Activated CD4-positive, alpha-beta T cell treated with anti-CD3 and anti-CD28 coated beads, Interleukin-2, amount 10 ng/mL, durations not matched to agents 24 days and 14 days (primary cell): ENCODE measurements at regions of chr13 and their contacts with region 1.

Region 1: DNA sequence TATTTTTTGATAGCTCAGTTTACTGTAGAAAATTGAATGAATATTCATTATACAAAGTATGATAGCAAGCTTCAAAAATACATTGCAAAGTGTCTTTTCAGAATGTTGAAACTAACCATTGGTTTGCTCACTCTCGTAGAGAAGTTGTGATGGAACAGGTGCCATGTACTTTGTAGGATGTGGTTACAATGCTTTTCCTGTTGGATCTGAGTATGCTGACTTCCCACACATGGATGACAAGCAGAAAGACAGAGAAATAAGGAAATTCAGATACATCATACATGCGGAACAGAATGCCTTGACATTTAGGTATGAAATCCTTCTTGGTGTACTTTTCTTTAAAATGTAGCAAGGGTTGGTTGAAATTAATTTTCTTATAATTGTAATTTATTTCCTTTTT is 30.5 kb downstream of the CDADC1 start:
- DNase-seq: no peak
- H3K4me3 Mint-ChIP-seq: no peak overlapping the region
- H3K27ac Mint-ChIP-seq: no peak overlapping the region
- H3K4me1 Mint-ChIP-seq: no peaks in the 10 kb centered on the region
- H3K27me3 Mint-ChIP-seq: no peaks in the 10 kb centered on the region

Region 2: DNA sequence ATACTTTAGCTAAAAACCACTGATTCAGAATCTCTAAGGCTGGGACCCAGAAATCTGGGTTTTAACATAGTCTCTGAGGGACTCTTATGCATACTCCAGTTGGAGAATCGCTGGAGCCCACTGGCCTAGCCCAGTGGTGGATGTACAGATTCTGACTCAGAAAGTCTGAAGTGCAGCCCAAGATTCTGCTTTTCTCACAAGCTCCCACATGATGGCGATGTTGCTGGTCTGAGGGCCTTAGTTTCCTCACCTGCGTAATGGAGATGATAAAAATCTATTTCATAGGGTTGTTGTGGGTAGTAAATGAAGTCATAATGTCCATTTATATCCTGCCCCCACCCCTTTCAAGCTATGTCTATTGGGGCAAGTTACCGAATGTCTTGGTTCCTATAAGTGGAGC is 38.2 kb before region 1 on chr13:
- intact Hi-C with region 1: loop called (anchors 1 kb)
- DNase-seq: peak; percentile 84
- H3K4me3 Mint-ChIP-seq: no peak overlapping the region
- H3K27ac Mint-ChIP-seq: no peak overlapping the region
- H3K4me1 Mint-ChIP-seq: peaks cover 4% of the 10 kb centered on the region
- H3K27me3 Mint-ChIP-seq: peaks cover 28% of the 10 kb centered on the region

Region 3: GRCh38 chr13:49690992-49691886 is 413.0 kb after region 1 on chr13 and contains the start of gene EBPL:
- intact Hi-C with region 1: no loop called
- DNase-seq: peak; percentile 96
- H3K4me3 Mint-ChIP-seq: peak within 1 kb of the TSS; percentile 93
- H3K27ac Mint-ChIP-seq: peak within 1 kb of the TSS; percentile 81
- H3K4me1 Mint-ChIP-seq: peaks cover 24% of the 10 kb centered on the region
- H3K27me3 Mint-ChIP-seq: no peaks in the 10 kb centered on the region
- total RNA-seq, gene EBPL: 49.0 and 52.3 TPM in 2 replicates

Region 4: GRCh38 chr13:50255639-50256038 is 977.4 kb after region 1 on chr13:
- intact Hi-C with region 1: no loop called
- DNase-seq: no peak
- H3K4me3 Mint-ChIP-seq: no peak overlapping the region
- H3K27ac Mint-ChIP-seq: no peak overlapping the region
- H3K4me1 Mint-ChIP-seq: peaks cover 27% of the 10 kb centered on the region
- H3K27me3 Mint-ChIP-seq: peaks cover 54% of the 10 kb centered on the region

Region 5: DNA sequence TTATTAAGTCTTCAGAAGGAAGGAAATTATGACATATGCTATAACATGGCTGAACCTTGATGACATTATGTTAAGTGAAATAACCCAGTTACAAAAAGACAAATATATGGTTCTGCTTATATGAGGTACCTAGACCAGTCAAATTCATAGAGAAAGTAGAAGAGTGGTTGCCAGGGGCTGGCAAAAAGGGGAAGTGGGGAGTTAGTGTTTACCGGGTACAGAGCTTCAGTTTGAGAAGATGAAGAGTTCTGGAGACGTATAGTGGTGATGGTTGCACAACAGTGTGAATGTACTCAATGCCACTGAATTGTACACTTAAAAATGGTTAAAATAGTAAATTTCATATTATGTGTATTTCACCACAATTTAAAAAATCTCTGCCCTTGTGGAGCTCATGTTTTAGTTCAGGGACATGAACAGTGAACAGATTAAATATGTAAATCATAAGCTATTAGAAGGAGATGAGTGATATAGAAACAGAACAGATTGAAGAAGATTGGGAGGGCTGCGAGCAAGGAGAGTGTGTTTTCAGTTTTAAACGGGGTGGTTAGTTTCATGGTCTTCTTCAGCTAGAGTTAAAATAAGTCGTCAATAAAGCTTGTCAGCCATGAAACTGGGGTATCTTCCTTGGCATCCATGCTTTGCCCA is 1092.2 kb after region 1 on chr13:
- intact Hi-C with region 1: no loop called
- DNase-seq: no peak
- H3K4me3 Mint-ChIP-seq: no peak overlapping the region
- H3K27ac Mint-ChIP-seq: no peak overlapping the region
- H3K4me1 Mint-ChIP-seq: peaks cover 22% of the 10 kb centered on the region
- H3K27me3 Mint-ChIP-seq: peaks cover 52% of the 10 kb centered on the region